Activated T-helper 1 cell treated with anti-CD3 and anti-CD28 coated beads, Interleukin-12 subunit alpha, Interleukin-12 subunit beta, Interleukin-2, Interleukin-4 antibody, amounts not matched to agents 30 ng/mL and 10 ng/mL and 1 ng/mL, durations not matched to agents 14 hours and 24 hours and 36 hours (primary cell): ENCODE measurements at regions of chr6 and their contacts with region 1.

Region 1: DNA sequence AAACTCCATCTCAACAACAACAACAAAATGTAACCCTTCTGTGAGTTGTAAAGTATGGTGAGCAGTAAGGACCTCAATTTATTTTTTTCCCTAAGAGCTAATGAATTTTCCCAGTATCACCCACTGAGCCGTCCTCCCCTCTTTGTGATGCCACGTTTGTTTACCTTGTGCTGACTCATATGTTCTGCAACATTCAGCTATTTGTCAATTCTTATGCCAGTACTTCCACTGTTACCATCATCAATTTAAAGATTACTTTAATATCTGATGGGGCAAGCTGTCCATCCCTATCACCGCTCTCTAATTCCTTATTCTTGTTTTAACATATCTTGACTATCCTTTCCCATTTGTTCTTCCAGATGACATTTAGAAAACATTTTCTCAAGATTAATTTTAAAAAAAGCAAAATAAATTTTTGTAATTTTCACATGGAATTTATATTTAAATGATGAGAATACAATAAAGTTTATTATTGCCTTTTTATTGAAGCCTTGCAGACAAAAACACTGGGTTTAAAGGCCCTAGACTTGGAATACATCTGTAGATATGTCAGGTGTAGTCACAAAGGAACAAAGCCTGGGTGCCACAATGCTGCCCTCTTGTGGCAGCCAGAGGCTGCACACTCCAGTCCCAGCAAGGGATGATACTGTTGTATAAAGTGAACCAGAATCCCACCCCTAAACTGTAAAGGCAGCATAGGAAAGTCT is 37.4 kb downstream of the MAK start:
- DNase-seq: peak; percentile 48
- H3K4me3 Mint-ChIP-seq: no peak overlapping the region
- H3K27ac Mint-ChIP-seq: no peak overlapping the region
- H3K4me1 Mint-ChIP-seq: no peaks in the 10 kb centered on the region
- H3K27me3 Mint-ChIP-seq: no peaks in the 10 kb centered on the region

Region 2: GRCh38 chr6:10478187-10479040 is 322.6 kb before region 1 on chr6:
- intact Hi-C with region 1: loop called (anchors 1 kb)
- DNase-seq: no peak
- H3K4me3 Mint-ChIP-seq: no peak overlapping the region
- H3K27ac Mint-ChIP-seq: no peak overlapping the region
- H3K4me1 Mint-ChIP-seq: no peaks in the 10 kb centered on the region
- H3K27me3 Mint-ChIP-seq: peaks cover 13% of the 10 kb centered on the region

Region 3: GRCh38 chr6:10722820-10723566 is 78.0 kb before region 1 on chr6 and contains the start of gene TMEM14C:
- intact Hi-C with region 1: loop called (anchors 1 kb)
- DNase-seq: peak; percentile 88
- H3K4me3 Mint-ChIP-seq: peak within 1 kb of the TSS; percentile 91
- H3K27ac Mint-ChIP-seq: peak within 1 kb of the TSS; percentile 93
- H3K4me1 Mint-ChIP-seq: peaks cover 55% of the 10 kb centered on the region
- H3K27me3 Mint-ChIP-seq: no peaks in the 10 kb centered on the region
- total RNA-seq, gene TMEM14C: 57.3 and 63.1 TPM in 2 replicates

Region 4: GRCh38 chr6:10747251-10747972 is 53.6 kb before region 1 on chr6 and contains the start of gene TMEM14B:
- intact Hi-C with region 1: no loop called
- DNase-seq: peak; percentile 100
- H3K4me3 Mint-ChIP-seq: peak within 1 kb of the TSS; percentile 93
- H3K27ac Mint-ChIP-seq: peak within 1 kb of the TSS; percentile 94
- H3K4me1 Mint-ChIP-seq: peaks cover 52% of the 10 kb centered on the region
- H3K27me3 Mint-ChIP-seq: no peaks in the 10 kb centered on the region
- total RNA-seq, gene TMEM14B: 82.1 and 83.7 TPM in 2 replicates

Region 5: GRCh38 chr6:10759312-10759839 is 41.6 kb before region 1 on chr6:
- intact Hi-C with region 1: loop called (anchors 1 kb)
- DNase-seq: no peak
- H3K4me3 Mint-ChIP-seq: no peak overlapping the region
- H3K27ac Mint-ChIP-seq: peak overlapping the region; percentile 29
- H3K4me1 Mint-ChIP-seq: peaks cover 26% of the 10 kb centered on the region
- H3K27me3 Mint-ChIP-seq: no peaks in the 10 kb centered on the region

Region 6: GRCh38 chr6:11188161-11188915 is 387.4 kb after region 1 on chr6:
- intact Hi-C with region 1: no loop called
- DNase-seq: no peak
- H3K4me3 Mint-ChIP-seq: no peak overlapping the region
- H3K27ac Mint-ChIP-seq: peak overlapping the region; percentile 52
- H3K4me1 Mint-ChIP-seq: peaks cover 7% of the 10 kb centered on the region
- H3K27me3 Mint-ChIP-seq: no peaks in the 10 kb centered on the region